ENCODE measurements at regions of chr13 and their contacts with region 1.

Region 1: DNA sequence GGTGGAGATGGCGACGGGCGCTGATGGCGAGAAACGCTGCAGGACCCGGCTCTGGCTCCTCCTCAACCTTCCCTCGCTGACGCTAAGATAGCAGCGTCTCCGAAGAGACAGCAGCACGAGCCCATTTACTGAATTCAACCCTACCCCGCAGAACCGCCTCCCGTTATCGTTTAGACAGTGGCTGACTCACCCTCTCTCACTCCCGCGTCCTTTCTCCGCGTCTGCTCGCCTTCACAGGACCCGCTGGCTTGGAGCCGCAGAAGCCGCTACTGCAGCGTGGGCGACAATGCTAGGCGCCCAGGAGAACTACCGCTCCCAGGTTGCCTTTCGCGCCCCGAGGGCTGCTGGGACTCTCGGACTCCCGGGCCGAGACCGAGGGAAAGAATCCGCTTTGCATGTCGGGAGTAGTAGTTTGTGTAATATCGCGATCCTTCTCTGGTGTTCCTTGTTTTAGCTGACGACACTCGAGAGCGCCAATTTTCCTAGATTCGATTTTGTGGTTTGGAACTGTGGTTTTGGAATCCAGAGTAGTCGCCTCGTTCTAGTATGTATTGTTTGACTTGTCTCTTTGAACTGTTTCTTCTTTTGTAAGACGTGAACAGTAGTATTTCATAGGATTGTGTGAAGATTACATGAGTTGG is at the start of gene KBTBD6:
- DNase-seq: peak; percentile 98 to 99
- ATAC-seq: peak; percentile 99
- H3K4me3 ChIP-seq: peak within 1 kb of the TSS; percentile 50 to 61
- H3K27ac ChIP-seq: peak within 1 kb of the TSS in 1 of 2 donors; percentile 80
- H3K4me1 ChIP-seq: peaks cover 3 to 7% of the 10 kb centered on the region in 2 donors
- H3K27me3 ChIP-seq: no peaks in the 10 kb centered on the region
- total RNA-seq, gene KBTBD6: 4.3 to 7.7 TPM

Region 2: GRCh38 chr13:41061075-41061913 is 71.3 kb before region 1 on chr13 and contains the start of gene WBP4:
- intact Hi-C with region 1: loop called in 1 of 2 experiments (anchors 5 kb)
- DNase-seq: peak; percentile 96 to 98
- ATAC-seq: peak; percentile 94
- H3K4me3 ChIP-seq: peak within 1 kb of the TSS; percentile 36 to 97
- H3K27ac ChIP-seq: peak within 1 kb of the TSS; percentile 94 to 96
- H3K4me1 ChIP-seq: peaks cover 1 to 7% of the 10 kb centered on the region in 2 donors
- H3K27me3 ChIP-seq: no peaks in the 10 kb centered on the region
- total RNA-seq, gene WBP4: 11.2 to 14.3 TPM

Measured in aorta (tissue), 5 donors.